ENCODE measurements at regions of chr7 and their contacts with region 1.

Region 1: DNA sequence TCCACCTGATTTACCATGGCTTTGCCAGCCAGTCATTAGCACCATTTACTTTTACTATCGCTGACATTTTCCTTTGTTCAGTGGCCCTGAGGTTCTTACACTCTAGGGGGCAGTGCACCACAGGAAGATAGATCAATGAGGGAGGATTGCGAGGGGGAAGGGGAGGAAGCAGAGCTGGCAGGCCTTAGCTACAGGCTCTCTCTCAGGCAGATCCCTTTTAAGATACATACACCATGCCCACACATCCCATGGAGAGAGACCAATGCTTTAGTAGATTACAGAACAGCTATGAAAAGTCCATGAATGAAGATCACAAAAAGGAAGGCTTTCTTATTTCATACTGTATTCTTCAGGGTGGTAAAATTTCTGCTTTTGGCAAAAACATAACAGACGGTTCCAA is 47.4 kb downstream of the DENND11 start:
- DNase-seq: peak in 2 of 3 donors; percentile 44 to 88
- ATAC-seq: peak; percentile 93
- H3K4me3 ChIP-seq: no peak overlapping the region
- H3K4me1 ChIP-seq: no peaks in the 10 kb centered on the region
- CTCF ChIP-seq: peak; percentile 38

Region 2: GRCh38 chr7:141785706-141786552 is 131.4 kb after region 1 on chr7:
- intact Hi-C with region 1: loop called in 1 of 2 experiments (anchors 10 kb)
- DNase-seq: peak in 1 of 3 donors; percentile 46
- ATAC-seq: peak; percentile 68
- H3K4me3 ChIP-seq: no peak overlapping the region
- H3K4me1 ChIP-seq: no peaks in the 10 kb centered on the region
- CTCF ChIP-seq: peak; percentile 57